Right cardiac atrium (tissue), 5 donors: ENCODE measurements at regions of chr2 and their contacts with region 1.

Region 1: DNA sequence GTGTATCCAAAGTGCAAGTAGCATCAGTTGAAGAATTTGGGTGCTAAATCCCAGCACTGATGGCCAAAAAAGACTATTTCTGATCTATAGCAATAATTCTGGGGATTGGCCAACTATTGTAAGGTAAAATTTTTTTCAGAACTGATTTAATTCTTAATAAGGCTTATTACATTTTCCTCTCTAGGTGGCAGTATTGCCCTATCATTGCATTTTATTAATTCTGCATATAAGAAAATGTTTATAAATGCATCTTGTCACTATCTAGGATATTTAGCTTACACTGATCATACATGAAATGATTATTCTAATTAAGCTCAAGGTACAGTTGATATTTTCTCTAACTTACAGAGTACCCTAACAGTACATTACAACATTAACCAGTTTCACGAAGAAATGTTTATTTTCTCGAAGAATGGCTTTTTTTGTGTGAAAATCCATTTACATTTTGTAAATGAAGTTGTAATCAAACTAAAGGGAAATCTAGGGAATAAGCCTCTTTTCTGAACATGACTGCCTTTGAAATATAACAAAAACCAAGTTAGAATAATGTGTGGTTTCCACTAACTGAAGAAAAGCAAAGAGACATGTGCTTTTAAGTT is 11.0 kb downstream of the TTN start:
- DNase-seq: no peak
- ATAC-seq: no peak
- H3K4me3 ChIP-seq: no peak overlapping the region
- H3K27ac ChIP-seq: no peak overlapping the region
- H3K4me1 ChIP-seq: no peaks in the 10 kb centered on the region
- H3K27me3 ChIP-seq: no peaks in the 10 kb centered on the region

Region 2: GRCh38 chr2:178914259-178914849 is 118.2 kb after region 1 on chr2:
- intact Hi-C with region 1: loop called (anchors 2 to 5 kb)
- DNase-seq: peak; percentile 84 to 93 (median 91)
- ATAC-seq: peak; percentile 89 to 92
- H3K4me3 ChIP-seq: no peak overlapping the region
- H3K27ac ChIP-seq: no peak overlapping the region
- H3K4me1 ChIP-seq: no peaks in the 10 kb centered on the region
- H3K27me3 ChIP-seq: no peaks in the 10 kb centered on the region